ENCODE measurements at regions of chr3 and their contacts with region 1.

Region 1: DNA sequence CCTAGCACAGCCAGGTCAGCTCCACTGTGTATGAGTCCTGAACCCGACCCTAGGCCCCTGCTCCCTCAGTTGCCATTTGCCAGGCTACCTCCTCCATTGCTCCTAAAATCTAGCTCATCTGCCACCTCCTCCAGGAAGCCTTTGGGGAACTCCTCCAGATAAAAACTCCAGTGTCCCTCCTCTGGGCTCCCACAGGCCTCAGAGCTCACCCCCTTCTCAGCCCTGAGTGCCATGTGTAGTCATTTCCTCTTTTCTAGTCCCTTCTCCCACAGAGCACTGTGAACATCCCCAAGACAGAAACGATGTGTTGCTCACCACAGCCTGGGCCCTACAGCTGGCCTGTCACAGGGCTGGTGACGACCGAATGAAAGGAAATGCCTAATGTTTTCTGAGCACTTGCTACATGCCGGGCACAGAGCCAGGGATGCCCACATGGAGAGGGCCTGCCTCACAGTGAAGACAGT is 61.0 kb downstream of the IQSEC1 start:
- DNase-seq: peak; percentile 84
- ATAC-seq: peak; percentile 58
- H3K4me3 ChIP-seq: peak overlapping the region; percentile 39; the same call in 1 of the 2 replicates
- H3K27ac ChIP-seq: peak overlapping the region; percentile 99
- H3K4me1 ChIP-seq: peaks cover 94% of the 10 kb centered on the region
- H3K27me3 ChIP-seq: no peaks in the 10 kb centered on the region
- CTCF ChIP-seq: no peak
- EP300 ChIP-seq: peak; percentile 51 to 58; a peak in 2 of 4 replicates
- POLR2A ChIP-seq: no peak
- RAD21 ChIP-seq: no peak

Region 2: GRCh38 chr3:12436514-12437220 is 575.6 kb before region 1 on chr3:
- CTCF ChIA-PET with region 1: no interaction called
- POLR2A ChIA-PET with region 1: no interaction called
- RAD21 ChIA-PET with region 1: no interaction called
- SMC1A ChIA-PET with region 1: no interaction called
- in situ Hi-C with region 1: no loop called
- intact Hi-C with region 1: no loop called
- DNase-seq: no peak
- ATAC-seq: no peak
- H3K4me3 ChIP-seq: no peak overlapping the region
- H3K27ac ChIP-seq: no peak overlapping the region
- H3K4me1 ChIP-seq: no peaks in the 10 kb centered on the region
- H3K27me3 ChIP-seq: no peaks in the 10 kb centered on the region; a peak in 2 of 4 replicates
- CTCF ChIP-seq: no peak
- EP300 ChIP-seq: no peak
- POLR2A ChIP-seq: no peak
- RAD21 ChIP-seq: no peak

Region 3: GRCh38 chr3:12934431-12934830 is 77.8 kb before region 1 on chr3:
- CTCF ChIA-PET with region 1: no interaction called
- POLR2A ChIA-PET with region 1: no interaction called
- RAD21 ChIA-PET with region 1: no interaction called
- SMC1A ChIA-PET with region 1: no interaction called
- in situ Hi-C with region 1: no loop called
- intact Hi-C with region 1: no loop called
- DNase-seq: no peak
- ATAC-seq: no peak
- H3K4me3 ChIP-seq: no peak overlapping the region
- H3K27ac ChIP-seq: no peak overlapping the region
- H3K4me1 ChIP-seq: no peaks in the 10 kb centered on the region
- H3K27me3 ChIP-seq: no peaks in the 10 kb centered on the region
- CTCF ChIP-seq: no peak
- EP300 ChIP-seq: no peak
- POLR2A ChIP-seq: no peak
- RAD21 ChIP-seq: no peak

Region 4: GRCh38 chr3:12973827-12974226 is 38.4 kb before region 1 on chr3:
- CTCF ChIA-PET with region 1: interaction called, 3 read pairs
- POLR2A ChIA-PET with region 1: no interaction called
- RAD21 ChIA-PET with region 1: interaction called, 10 read pairs
- SMC1A ChIA-PET with region 1: interaction called, 3 read pairs
- in situ Hi-C with region 1: no loop called
- intact Hi-C with region 1: no loop called
- DNase-seq: no peak
- ATAC-seq: peak; percentile 75
- H3K4me3 ChIP-seq: no peak overlapping the region
- H3K27ac ChIP-seq: no peak overlapping the region
- H3K4me1 ChIP-seq: peaks cover 10% of the 10 kb centered on the region
- H3K27me3 ChIP-seq: no peaks in the 10 kb centered on the region
- CTCF ChIP-seq: no peak
- EP300 ChIP-seq: no peak
- POLR2A ChIP-seq: no peak
- RAD21 ChIP-seq: no peak

Region 5: DNA sequence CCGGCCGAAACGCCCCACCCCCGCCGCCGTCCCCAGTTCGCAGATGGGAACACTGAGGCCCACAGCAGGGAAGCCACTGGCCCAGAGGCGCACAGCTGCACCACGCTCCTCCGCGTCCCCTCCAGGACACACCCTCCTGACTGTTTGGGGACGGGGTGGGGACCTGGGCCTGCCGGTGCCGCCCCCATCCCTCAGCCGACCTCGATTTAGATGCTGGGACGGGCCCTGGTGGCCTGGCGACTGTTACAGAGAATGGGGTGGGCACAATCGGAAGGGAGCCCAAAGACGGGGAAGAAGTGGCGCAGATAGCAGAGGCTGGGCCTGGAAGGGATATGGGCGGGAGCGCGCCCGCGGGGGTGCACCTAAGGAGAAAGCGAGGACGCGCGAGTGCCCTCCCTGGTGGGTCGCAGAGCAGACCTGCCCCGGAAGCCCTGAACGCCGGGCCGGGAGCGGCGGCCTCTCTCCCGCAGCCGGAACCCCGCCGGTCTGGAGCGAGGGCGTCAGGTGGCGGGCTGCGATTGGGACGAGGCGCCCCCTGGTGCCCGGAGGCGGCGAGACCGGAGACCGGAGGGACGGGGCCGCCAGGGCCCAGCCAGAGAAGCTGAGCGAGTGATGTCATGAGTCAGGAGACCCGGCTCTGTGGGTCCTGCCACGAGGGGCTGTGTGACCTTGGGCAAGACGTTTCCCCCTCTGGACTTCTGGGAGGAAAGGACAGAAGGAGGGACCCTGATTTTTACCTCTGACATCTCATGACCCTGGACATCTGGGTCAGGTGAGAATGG is 17.5 kb before region 1 on chr3:
- CTCF ChIA-PET with region 1: interaction called, 57 read pairs
- POLR2A ChIA-PET with region 1: interaction called, 65 read pairs
- RAD21 ChIA-PET with region 1: interaction called, 43 read pairs
- SMC1A ChIA-PET with region 1: interaction called, 54 read pairs
- in situ Hi-C with region 1: no loop called
- intact Hi-C with region 1: loop called (anchors 2 kb)
- DNase-seq: no peak
- ATAC-seq: peak; percentile 90
- H3K4me3 ChIP-seq: peak overlapping the region; percentile 89
- H3K27ac ChIP-seq: peak overlapping the region; percentile 79
- H3K4me1 ChIP-seq: peaks cover 34% of the 10 kb centered on the region
- H3K27me3 ChIP-seq: no peaks in the 10 kb centered on the region
- CTCF ChIP-seq: peak; percentile 87 to 90 (median 90)
- EP300 ChIP-seq: no peak
- POLR2A ChIP-seq: peak; percentile 75
- RAD21 ChIP-seq: peak; percentile 61

Region 6: DNA sequence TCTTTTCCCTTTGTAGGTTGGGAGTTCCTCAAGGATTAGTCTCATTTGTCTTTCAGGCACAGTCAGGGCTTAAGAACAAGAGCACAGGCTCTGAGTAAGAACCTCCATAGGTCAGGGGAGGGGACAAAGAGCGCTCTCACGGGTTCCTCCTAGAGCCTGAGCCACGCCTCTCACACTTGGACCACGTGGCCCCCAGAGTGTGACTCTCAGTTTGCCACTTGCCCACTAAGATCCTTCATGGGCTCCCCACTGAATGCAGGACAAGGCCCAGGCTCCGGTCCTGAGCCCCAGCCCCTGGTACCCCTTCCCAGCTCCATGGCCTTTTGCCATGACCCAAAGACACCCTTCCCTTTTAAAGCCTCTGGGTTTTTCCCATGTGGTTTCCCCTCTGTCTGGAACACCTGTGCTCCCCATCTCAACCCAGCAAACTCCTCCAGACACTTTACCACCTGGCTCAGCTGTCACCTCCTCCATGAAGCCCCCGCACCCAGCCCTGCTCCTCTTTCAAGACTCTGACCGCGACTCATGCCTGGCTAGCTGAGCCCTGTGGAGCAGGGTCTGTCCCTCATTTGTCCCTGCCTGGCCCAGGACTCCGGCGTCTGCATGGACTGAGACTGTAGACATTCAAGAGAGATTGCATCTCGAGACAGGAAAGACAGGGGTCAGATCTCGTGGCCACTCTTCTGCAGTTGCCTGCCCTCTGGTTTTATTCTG is 28.3 kb after region 1 on chr3:
- CTCF ChIA-PET with region 1: interaction called, 56 read pairs
- POLR2A ChIA-PET with region 1: interaction called, 84 read pairs
- RAD21 ChIA-PET with region 1: interaction called, 93 read pairs
- SMC1A ChIA-PET with region 1: interaction called, 71 read pairs
- in situ Hi-C with region 1: no loop called
- intact Hi-C with region 1: no loop called
- DNase-seq: no peak
- ATAC-seq: peak; percentile 99
- H3K4me3 ChIP-seq: no peak overlapping the region
- H3K27ac ChIP-seq: no peak overlapping the region
- H3K4me1 ChIP-seq: peaks cover 23% of the 10 kb centered on the region
- H3K27me3 ChIP-seq: no peaks in the 10 kb centered on the region
- CTCF ChIP-seq: no peak
- EP300 ChIP-seq: no peak
- POLR2A ChIP-seq: no peak
- RAD21 ChIP-seq: no peak

Region 7: GRCh38 chr3:13073326-13074005 is 61.2 kb after region 1 on chr3 and contains the start of gene IQSEC1:
- CTCF ChIA-PET with region 1: interaction called, 12 read pairs
- POLR2A ChIA-PET with region 1: interaction called, 25 read pairs
- RAD21 ChIA-PET with region 1: interaction called, 38 read pairs
- SMC1A ChIA-PET with region 1: interaction called, 39 read pairs
- in situ Hi-C with region 1: no loop called
- intact Hi-C with region 1: loop called (anchors 2 kb)
- DNase-seq: no peak
- ATAC-seq: peak; percentile 67
- H3K4me3 ChIP-seq: peak within 1 kb of the TSS; percentile 77
- H3K27ac ChIP-seq: no peak within 1 kb of the TSS
- H3K4me1 ChIP-seq: peaks cover 45% of the 10 kb centered on the region
- H3K27me3 ChIP-seq: peaks cover 0 to 11% of the 10 kb centered on the region in 2 experiments; a peak in 2 of 4 replicates
- CTCF ChIP-seq: 0 out of 6 replicates have a peak, but pooled peaks of 2 of the 3 experiments have one; percentile 1 to 3
- EP300 ChIP-seq: no peak
- POLR2A ChIP-seq: no peak
- RAD21 ChIP-seq: no peak
- polyA plus RNA-seq, gene IQSEC1: 0.92 to 2.0 TPM

Region 8: DNA sequence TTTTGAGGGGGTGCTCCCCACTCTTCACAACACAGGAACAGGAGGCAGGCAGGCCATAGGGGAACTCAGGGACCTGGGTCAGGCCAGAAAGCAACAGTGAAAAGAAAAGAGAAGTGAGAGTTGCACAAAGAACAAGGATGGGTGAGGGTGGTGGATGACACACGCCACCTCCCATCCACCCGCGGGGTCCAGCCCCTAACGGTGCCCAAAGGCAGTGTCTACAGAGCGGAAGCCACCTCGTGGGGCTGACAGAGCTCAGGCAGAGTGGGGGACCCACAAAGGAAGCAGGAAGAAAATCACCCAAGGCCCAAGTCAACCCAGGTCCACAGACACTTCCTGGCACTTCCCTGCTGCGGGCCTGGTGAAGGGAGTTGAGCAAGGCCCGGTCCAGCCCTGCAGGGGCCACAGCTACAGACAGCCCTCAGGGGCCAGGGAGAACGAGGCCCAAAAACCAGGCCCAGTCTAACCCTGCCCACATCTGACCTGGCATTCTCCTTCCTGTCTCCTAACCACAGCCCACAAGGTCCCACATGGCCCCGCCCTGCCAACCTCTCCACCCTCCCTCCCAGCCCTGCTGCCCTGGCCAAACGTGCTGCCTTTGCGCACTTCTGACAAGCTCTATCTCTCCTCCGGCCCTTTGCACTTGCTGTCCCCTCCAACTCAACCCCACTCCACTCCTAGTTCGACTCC is 401.9 kb after region 1 on chr3:
- CTCF ChIA-PET with region 1: interaction called, 4 read pairs
- POLR2A ChIA-PET with region 1: interaction called, 4 read pairs
- RAD21 ChIA-PET with region 1: interaction called, 5 read pairs
- SMC1A ChIA-PET with region 1: no interaction called
- in situ Hi-C with region 1: no loop called
- intact Hi-C with region 1: loop called (anchors 1 kb)
- DNase-seq: peak; percentile 89
- ATAC-seq: peak; percentile 89
- H3K4me3 ChIP-seq: peak overlapping the region; percentile 80
- H3K27ac ChIP-seq: peak overlapping the region; percentile 98
- H3K4me1 ChIP-seq: peaks cover 46% of the 10 kb centered on the region
- H3K27me3 ChIP-seq: no peaks in the 10 kb centered on the region
- CTCF ChIP-seq: no peak
- EP300 ChIP-seq: peak; percentile 68 to 89; a peak in 3 of 4 replicates
- POLR2A ChIP-seq: peak; percentile 56
- RAD21 ChIP-seq: no peak